ENCODE measurements at regions of chr17 and their contacts with region 1.

Region 1: DNA sequence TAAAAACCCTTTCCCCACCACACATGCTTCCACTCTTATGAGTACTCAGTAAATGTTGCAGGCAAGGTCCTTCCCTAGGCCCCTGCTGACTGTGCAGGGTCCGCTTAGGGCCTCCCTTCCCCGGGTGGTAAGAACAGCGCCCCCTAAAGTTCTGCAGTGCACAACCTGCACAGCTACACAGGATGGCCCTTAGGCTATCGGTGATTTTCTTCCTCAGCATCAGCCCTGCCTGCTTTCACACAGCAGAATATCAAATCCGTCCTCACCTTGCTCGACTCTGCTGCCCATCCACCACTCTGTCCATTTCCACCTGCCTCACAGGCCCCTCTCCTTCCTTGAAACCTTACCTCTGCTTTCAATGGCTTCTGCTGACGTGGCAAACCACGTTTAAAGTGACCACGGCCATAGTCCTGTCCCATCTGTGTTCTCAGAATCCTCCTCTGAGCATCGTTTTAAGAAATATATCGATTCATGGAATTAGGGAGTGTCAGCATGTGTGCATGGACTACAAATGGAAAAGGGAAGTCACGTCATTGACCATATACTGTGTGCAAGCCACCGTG is 51.4 kb upstream of the TMEM132E start:
- DNase-seq: peak in 1 of 2 experiments; percentile 67
- H3K4me3 ChIP-seq: no peak overlapping the region
- H3K27ac ChIP-seq: no peak overlapping the region
- H3K4me1 ChIP-seq: peaks cover 0 to 3% (median 0%) of the 10 kb centered on the region in 4 experiments; a peak in 1 of 7 replicates
- H3K27me3 ChIP-seq: no peaks in the 10 kb centered on the region; a peak in 1 of 7 replicates
- CTCF ChIP-seq: peak; percentile 71 to 81 (median 74)
- EP300 ChIP-seq: no peak
- POLR2A ChIP-seq: no peak
- RAD21 ChIP-seq: peak; percentile 47 to 60; a peak in 3 of 4 replicates

Region 2: GRCh38 chr17:34436607-34437006 is 91.4 kb before region 1 on chr17:
- CTCF ChIA-PET with region 1: interaction called, 11 read pairs
- POLR2A ChIA-PET with region 1: no interaction called
- DNase-seq: no peak
- H3K4me3 ChIP-seq: no peak overlapping the region
- H3K27ac ChIP-seq: no peak overlapping the region
- H3K4me1 ChIP-seq: no peaks in the 10 kb centered on the region; a peak in 2 of 7 replicates
- H3K27me3 ChIP-seq: no peaks in the 10 kb centered on the region; a peak in 1 of 7 replicates
- CTCF ChIP-seq: peak; percentile 18 to 49 (median 23); a peak in 3 of 4 replicates
- EP300 ChIP-seq: no peak
- POLR2A ChIP-seq: no peak
- RAD21 ChIP-seq: peak; percentile 47 to 56

Region 3: DNA sequence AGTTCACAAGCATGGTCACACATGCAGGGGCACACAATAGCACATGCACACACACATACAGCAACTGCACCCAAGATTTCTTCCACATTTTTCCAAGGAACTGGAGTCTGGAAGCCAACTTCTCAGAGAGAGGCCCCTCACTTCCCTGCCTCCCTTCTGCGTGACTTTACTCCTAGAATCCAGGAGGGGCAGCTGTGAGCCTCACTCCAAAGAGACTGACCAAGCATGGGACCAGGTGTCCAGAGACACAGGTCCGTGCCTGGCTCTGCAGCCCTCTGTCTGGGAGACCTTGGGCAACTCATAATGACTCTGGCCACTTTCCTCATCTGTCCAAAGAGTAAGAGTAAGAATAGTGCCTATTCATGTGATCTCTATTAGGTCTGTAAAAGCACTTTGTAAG is 53.3 kb before region 1 on chr17:
- CTCF ChIA-PET with region 1: interaction called, 10 read pairs
- POLR2A ChIA-PET with region 1: no interaction called
- DNase-seq: no peak
- H3K4me3 ChIP-seq: no peak overlapping the region
- H3K27ac ChIP-seq: no peak overlapping the region
- H3K4me1 ChIP-seq: no peaks in the 10 kb centered on the region; a peak in 1 of 7 replicates
- H3K27me3 ChIP-seq: no peaks in the 10 kb centered on the region
- CTCF ChIP-seq: peak; percentile 41 to 49 (median 48)
- EP300 ChIP-seq: no peak
- POLR2A ChIP-seq: no peak
- RAD21 ChIP-seq: peak; percentile 25 to 48; a peak in 3 of 4 replicates

Region 4: GRCh38 chr17:34485999-34486398 is 42.0 kb before region 1 on chr17:
- CTCF ChIA-PET with region 1: no interaction called
- POLR2A ChIA-PET with region 1: no interaction called
- DNase-seq: no peak
- H3K4me3 ChIP-seq: no peak overlapping the region
- H3K27ac ChIP-seq: no peak overlapping the region
- H3K4me1 ChIP-seq: peaks cover 0 to 2% (median 0%) of the 10 kb centered on the region in 4 experiments; a peak in 1 of 7 replicates
- H3K27me3 ChIP-seq: no peaks in the 10 kb centered on the region; a peak in 2 of 7 replicates
- CTCF ChIP-seq: no peak
- EP300 ChIP-seq: no peak
- POLR2A ChIP-seq: no peak
- RAD21 ChIP-seq: no peak

Region 5: GRCh38 chr17:34562387-34562786 is 34.4 kb after region 1 on chr17:
- CTCF ChIA-PET with region 1: interaction called, 20 read pairs
- POLR2A ChIA-PET with region 1: no interaction called
- DNase-seq: no peak
- H3K4me3 ChIP-seq: no peak overlapping the region
- H3K27ac ChIP-seq: no peak overlapping the region
- H3K4me1 ChIP-seq: no peaks in the 10 kb centered on the region; a peak in 1 of 7 replicates
- H3K27me3 ChIP-seq: peaks cover 0 to 10% (median 0%) of the 10 kb centered on the region in 4 experiments; a peak in 2 of 7 replicates
- CTCF ChIP-seq: peak; percentile 39 to 82 (median 66)
- EP300 ChIP-seq: no peak
- POLR2A ChIP-seq: no peak
- RAD21 ChIP-seq: peak; percentile 71 to 73

Region 6: DNA sequence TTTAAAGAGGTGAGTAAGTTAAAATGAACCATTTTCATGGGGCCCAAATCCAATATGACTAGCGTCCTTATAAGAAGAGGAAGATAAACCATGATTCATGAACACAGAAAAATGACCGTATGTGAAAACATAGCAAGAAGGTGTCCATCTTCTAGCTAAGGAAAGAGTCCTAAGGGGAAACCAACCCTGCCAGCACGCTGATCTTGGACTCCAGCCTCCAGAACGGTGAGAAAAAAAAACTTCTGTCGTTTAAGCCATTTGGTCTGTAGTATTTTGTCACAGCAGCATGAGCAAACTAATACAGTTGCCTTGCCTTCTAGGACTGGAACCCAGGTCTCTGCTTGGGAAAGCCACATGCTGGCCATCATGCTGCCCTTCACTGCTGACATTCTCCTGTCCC is 47.2 kb after region 1 on chr17:
- CTCF ChIA-PET with region 1: no interaction called
- POLR2A ChIA-PET with region 1: no interaction called
- DNase-seq: no peak
- H3K4me3 ChIP-seq: no peak overlapping the region
- H3K27ac ChIP-seq: no peak overlapping the region
- H3K4me1 ChIP-seq: peaks cover 10 to 29% (median 21%) of the 10 kb centered on the region in 4 experiments
- H3K27me3 ChIP-seq: peaks cover 27 to 61% (median 54%) of the 10 kb centered on the region in 4 experiments
- CTCF ChIP-seq: no peak
- EP300 ChIP-seq: no peak
- POLR2A ChIP-seq: no peak
- RAD21 ChIP-seq: no peak